Caco-2 (cell line): ENCODE measurements at regions of chr14 and their contacts with region 1.

Region 1: GRCh38 chr14:89336338-89336737 is 80.7 kb downstream of the FOXN3 start:
- DNase-seq: peak; percentile 39 to 46
- H3K4me3 ChIP-seq: no peak overlapping the region
- H3K4me3 Mint-ChIP-seq: no peak overlapping the region
- H3K27ac Mint-ChIP-seq: peak overlapping the region; percentile 79
- H3K4me1 ChIP-seq: peaks cover 47% of the 10 kb centered on the region
- H3K4me1 Mint-ChIP-seq: peaks cover 30% of the 10 kb centered on the region
- H3K27me3 ChIP-seq: no peaks in the 10 kb centered on the region
- H3K27me3 Mint-ChIP-seq: no peaks in the 10 kb centered on the region
- CTCF ChIP-seq: peak; percentile 19 to 20

Region 2: DNA sequence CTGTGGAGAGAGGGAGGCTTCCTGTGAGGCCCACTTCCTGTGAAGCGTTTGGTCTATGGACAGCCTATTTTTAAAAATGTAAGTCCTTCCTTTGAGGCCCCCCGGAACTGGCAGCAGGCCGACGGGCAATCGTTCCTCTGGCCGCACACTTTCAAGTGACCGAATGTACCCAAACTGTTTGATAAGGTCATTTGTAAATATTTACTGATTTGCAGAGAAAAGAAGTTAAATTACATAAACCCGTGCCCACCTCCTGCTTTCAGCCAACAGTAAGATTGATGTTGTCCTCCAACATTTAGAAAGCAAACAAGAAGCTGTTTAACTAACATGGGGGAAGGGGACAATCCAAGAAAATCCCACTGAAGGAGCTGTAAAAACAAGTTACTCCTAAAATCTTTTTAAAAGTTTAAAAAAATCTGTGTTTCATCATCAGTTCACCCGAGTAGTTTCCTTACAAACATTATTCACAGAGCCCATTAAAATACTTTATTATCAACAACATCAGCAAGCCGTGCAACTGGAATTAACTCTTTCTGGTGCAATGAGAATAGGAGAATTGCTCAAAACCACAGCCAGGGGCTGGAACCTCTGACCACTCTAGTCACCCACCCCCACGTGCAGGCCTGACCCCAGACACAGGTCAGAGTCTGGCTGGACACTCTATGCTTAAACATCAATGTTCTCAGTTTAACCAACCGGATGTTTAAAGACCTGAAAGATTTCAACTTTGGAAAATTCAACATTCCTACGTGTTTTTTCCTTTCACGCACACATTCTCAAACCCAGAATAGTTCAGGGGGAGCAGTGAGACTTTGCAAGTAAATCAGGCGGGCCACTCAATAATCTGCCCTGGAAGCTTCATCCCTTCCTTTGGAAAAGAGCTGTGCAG is 15.4 kb after region 1 on chr14:
- CTCF ChIA-PET with region 1: interaction called, 4 read pairs
- POLR2A ChIA-PET with region 1: interaction called, 3 read pairs
- intact Hi-C with region 1: loop called (anchors 1 kb)
- DNase-seq: peak; percentile 67 to 73
- H3K4me3 ChIP-seq: peak overlapping the region; percentile 11; the same call in 1 of the 2 replicates
- H3K4me3 Mint-ChIP-seq: peak overlapping the region; percentile 62
- H3K27ac Mint-ChIP-seq: peak overlapping the region; percentile 73
- H3K4me1 ChIP-seq: peaks cover 15% of the 10 kb centered on the region
- H3K4me1 Mint-ChIP-seq: peaks cover 7% of the 10 kb centered on the region
- H3K27me3 ChIP-seq: no peaks in the 10 kb centered on the region
- H3K27me3 Mint-ChIP-seq: no peaks in the 10 kb centered on the region
- CTCF ChIP-seq: peak in 1 of 2 experiments; percentile 3

Region 3: GRCh38 chr14:89368490-89369477 is 32.4 kb after region 1 on chr14:
- CTCF ChIA-PET with region 1: interaction called, 6 read pairs
- POLR2A ChIA-PET with region 1: no interaction called
- intact Hi-C with region 1: loop called (anchors 1 kb)
- DNase-seq: peak; percentile 72 to 87
- H3K4me3 ChIP-seq: no peak overlapping the region
- H3K4me3 Mint-ChIP-seq: peak overlapping the region; percentile 53
- H3K27ac Mint-ChIP-seq: peak overlapping the region; percentile 71
- H3K4me1 ChIP-seq: peaks cover 24% of the 10 kb centered on the region
- H3K4me1 Mint-ChIP-seq: peaks cover 13% of the 10 kb centered on the region
- H3K27me3 ChIP-seq: no peaks in the 10 kb centered on the region
- H3K27me3 Mint-ChIP-seq: no peaks in the 10 kb centered on the region
- CTCF ChIP-seq: no peak

Region 4: GRCh38 chr14:89384023-89384422 is 47.7 kb after region 1 on chr14:
- CTCF ChIA-PET with region 1: interaction called, 3 read pairs
- POLR2A ChIA-PET with region 1: no interaction called
- intact Hi-C with region 1: loop called (anchors 5 kb)
- DNase-seq: no peak
- H3K4me3 ChIP-seq: no peak overlapping the region
- H3K4me3 Mint-ChIP-seq: no peak overlapping the region
- H3K27ac Mint-ChIP-seq: no peak overlapping the region
- H3K4me1 ChIP-seq: no peaks in the 10 kb centered on the region
- H3K4me1 Mint-ChIP-seq: no peaks in the 10 kb centered on the region
- H3K27me3 ChIP-seq: no peaks in the 10 kb centered on the region
- H3K27me3 Mint-ChIP-seq: no peaks in the 10 kb centered on the region
- CTCF ChIP-seq: no peak

Region 5: DNA sequence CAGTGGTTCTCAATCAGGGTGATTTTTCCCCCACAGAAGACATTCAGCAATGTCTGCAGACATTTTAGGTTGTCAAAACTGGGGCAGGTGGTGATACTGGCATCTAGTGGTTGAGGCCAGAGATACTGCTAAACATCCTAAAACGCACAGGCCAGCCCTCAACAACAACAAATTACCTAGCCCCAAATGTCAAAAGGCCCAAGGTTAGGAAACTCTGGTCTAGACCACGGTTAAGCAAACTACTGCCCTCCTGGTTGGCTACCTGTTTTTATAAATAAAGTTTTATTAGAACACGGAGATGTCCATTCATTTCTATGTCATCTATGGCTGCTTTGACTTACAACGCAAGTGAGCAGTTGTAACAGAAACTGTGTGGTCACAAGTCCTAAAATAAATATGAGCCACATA is 431.5 kb after region 1 on chr14:
- CTCF ChIA-PET with region 1: no interaction called
- POLR2A ChIA-PET with region 1: no interaction called
- intact Hi-C with region 1: loop called (anchors 2 kb)
- DNase-seq: peak in 1 of 2 experiments; percentile 62
- H3K4me3 ChIP-seq: no peak overlapping the region
- H3K4me3 Mint-ChIP-seq: no peak overlapping the region
- H3K27ac Mint-ChIP-seq: no peak overlapping the region
- H3K4me1 ChIP-seq: no peaks in the 10 kb centered on the region
- H3K4me1 Mint-ChIP-seq: no peaks in the 10 kb centered on the region
- H3K27me3 ChIP-seq: no peaks in the 10 kb centered on the region
- H3K27me3 Mint-ChIP-seq: peaks cover 3% of the 10 kb centered on the region
- CTCF ChIP-seq: peak; percentile 49 to 70

Region 6: GRCh38 chr14:89936658-89937185 is 600.4 kb after region 1 on chr14:
- CTCF ChIA-PET with region 1: no interaction called
- POLR2A ChIA-PET with region 1: interaction called, 20 read pairs
- intact Hi-C with region 1: no loop called
- DNase-seq: no peak
- H3K4me3 ChIP-seq: no peak overlapping the region
- H3K4me3 Mint-ChIP-seq: no peak overlapping the region
- H3K27ac Mint-ChIP-seq: no peak overlapping the region
- H3K4me1 ChIP-seq: no peaks in the 10 kb centered on the region
- H3K4me1 Mint-ChIP-seq: no peaks in the 10 kb centered on the region
- H3K27me3 ChIP-seq: no peaks in the 10 kb centered on the region
- H3K27me3 Mint-ChIP-seq: no peaks in the 10 kb centered on the region
- CTCF ChIP-seq: no peak